ENCODE measurements at regions of chr12 and their contacts with region 1.

Region 1: DNA sequence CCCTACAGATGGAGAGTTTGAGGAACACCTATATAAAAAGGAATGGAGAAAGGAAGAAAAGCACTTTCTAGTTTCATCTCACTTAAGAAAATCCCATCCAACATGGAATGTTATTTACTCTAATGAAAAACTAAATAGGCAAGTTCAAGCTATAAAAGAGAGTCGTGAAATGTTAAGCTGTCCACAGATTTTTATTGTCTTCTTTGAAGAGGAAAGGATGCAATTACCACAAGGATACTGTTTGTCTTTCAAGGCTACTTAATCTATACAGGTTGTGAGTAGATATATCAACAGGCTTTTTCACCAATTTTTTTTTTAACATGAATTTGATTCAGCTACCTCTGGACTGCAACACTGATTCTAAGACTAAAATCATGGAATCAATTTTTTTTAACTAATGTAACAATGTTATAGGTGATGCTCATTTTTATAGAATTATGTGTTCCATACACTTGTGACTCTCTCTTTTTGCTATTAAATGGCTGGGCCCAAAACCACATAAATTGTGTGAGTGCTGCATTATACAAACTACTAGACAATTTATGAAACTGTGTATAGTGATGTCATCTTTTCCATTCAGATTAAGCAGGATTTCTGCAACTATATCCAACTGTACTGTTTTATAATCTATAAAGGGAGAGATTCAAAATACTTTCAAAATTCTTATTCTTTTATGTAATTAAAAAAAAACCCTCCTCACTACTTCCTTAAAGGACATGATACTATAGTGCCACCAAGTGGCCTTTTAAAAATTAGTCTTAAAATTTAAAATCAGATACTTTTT is 26.8 kb upstream of the BMAL2 start:
- DNase-seq: no peak
- ATAC-seq: no peak
- H3K4me3 Mint-ChIP-seq: no peak overlapping the region
- H3K27ac Mint-ChIP-seq: no peak overlapping the region
- H3K4me1 Mint-ChIP-seq: peaks cover 9% of the 10 kb centered on the region
- H3K27me3 Mint-ChIP-seq: no peaks in the 10 kb centered on the region
- CTCF ChIP-seq: peak; percentile 69

Region 2: DNA sequence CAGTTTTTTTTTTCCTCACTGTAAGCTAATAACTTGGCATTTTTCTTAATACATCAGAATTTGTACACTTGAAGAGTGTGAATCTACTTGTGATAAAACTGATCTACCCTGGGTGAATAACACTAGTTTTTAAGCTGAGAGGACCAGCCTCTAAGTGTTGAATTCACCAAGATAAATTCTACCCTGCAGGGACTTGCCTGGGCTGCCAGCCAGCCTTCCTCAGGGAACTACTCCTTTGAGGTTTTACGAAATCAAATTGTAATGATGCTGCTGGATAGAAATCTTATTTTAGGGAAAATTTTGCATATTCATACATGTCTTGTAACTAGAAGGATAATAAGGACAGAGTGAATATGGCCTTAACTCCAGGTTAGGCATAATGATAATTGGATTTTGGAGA is 281.6 kb before region 1 on chr12:
- CTCF ChIA-PET with region 1: interaction called, 18 read pairs
- POLR2A ChIA-PET with region 1: interaction called, 6 read pairs
- intact Hi-C with region 1: no loop called
- DNase-seq: no peak
- ATAC-seq: no peak
- H3K4me3 Mint-ChIP-seq: peak overlapping the region; percentile 6
- H3K27ac Mint-ChIP-seq: no peak overlapping the region
- H3K4me1 Mint-ChIP-seq: peaks cover 32% of the 10 kb centered on the region
- H3K27me3 Mint-ChIP-seq: no peaks in the 10 kb centered on the region
- CTCF ChIP-seq: no peak

Region 3: DNA sequence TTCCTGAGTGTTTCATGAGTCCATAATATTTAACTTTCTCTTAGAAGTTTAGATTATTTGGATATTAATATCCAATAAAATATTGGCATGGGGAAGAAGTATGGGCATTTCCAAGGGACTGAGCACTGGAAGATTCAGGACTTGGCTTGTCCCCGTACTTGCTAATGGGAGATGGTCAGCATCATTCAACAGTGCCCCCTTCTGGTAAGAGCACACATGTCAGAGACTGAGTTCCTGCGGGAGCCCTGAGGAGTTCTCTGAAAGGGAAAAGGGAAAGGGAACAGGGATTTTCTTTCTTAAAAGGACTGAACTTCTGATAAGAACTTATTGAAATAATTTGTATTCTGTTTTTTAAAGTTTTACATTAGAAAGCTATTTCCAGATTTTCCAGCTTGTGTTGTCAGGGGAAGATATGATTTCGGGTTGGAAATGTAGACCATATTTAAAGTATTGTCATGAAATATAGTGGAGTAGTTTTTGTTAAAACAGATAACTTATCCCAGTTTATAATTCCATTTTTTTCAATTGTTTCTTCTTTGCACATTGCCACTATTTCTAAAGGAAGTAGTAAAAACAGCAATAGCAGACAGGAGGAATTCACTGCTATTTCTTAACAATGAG is 163.7 kb before region 1 on chr12:
- CTCF ChIA-PET with region 1: interaction called, 30 read pairs
- POLR2A ChIA-PET with region 1: no interaction called
- intact Hi-C with region 1: loop called (anchors 10 kb)
- DNase-seq: peak; percentile 56
- ATAC-seq: peak; percentile 65
- H3K4me3 Mint-ChIP-seq: no peak overlapping the region
- H3K27ac Mint-ChIP-seq: no peak overlapping the region
- H3K4me1 Mint-ChIP-seq: peaks cover 7% of the 10 kb centered on the region
- H3K27me3 Mint-ChIP-seq: no peaks in the 10 kb centered on the region
- CTCF ChIP-seq: peak; percentile 95

Region 4: DNA sequence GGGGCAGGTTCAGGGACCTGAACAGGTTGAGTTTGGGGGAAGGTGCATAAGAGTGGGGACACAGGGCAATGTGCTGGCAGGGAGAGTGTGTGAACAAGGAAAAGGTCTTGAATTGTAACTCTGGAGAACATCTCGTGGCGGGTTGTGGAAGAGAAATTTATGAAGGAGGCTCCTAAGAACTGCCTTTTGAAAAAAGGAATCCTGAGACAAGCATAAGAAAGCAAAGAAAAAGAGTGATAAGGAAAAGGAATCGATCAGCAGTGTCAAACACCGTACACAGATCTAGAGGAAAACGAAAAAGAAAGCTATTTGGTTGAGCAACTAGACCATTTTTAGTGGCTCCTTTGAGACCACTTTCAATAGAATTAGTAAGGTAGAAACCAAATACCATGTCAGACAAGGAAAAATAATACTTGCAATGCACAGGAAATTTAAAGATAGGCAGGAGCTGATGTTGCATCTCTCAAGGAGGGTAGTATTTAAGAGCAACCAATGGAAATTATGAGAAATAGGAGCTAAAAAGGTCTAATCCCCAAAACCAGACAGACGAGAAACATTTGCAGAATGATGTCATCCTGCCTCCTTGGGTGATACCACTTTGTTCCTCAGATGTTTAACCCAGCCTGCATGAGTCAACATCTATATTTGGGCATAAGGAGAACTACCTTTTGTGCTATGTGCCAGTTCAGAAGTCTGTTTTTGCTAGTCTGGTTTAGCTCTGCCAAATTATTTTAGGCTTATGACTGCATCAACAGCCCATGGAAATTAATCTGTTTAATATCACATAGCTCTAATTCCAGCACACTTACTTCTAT is 126.3 kb before region 1 on chr12:
- CTCF ChIA-PET with region 1: interaction called, 15 read pairs
- POLR2A ChIA-PET with region 1: no interaction called
- intact Hi-C with region 1: no loop called
- DNase-seq: peak; percentile 63
- ATAC-seq: peak; percentile 95
- H3K4me3 Mint-ChIP-seq: peak overlapping the region; percentile 39
- H3K27ac Mint-ChIP-seq: peak overlapping the region; percentile 88
- H3K4me1 Mint-ChIP-seq: peaks cover 36% of the 10 kb centered on the region
- H3K27me3 Mint-ChIP-seq: no peaks in the 10 kb centered on the region
- CTCF ChIP-seq: no peak

Region 5: GRCh38 chr12:27319409-27319808 is 13.5 kb after region 1 on chr12:
- CTCF ChIA-PET with region 1: interaction called, 17 read pairs
- POLR2A ChIA-PET with region 1: no interaction called
- intact Hi-C with region 1: no loop called
- DNase-seq: no peak
- ATAC-seq: no peak
- H3K4me3 Mint-ChIP-seq: no peak overlapping the region
- H3K27ac Mint-ChIP-seq: no peak overlapping the region
- H3K4me1 Mint-ChIP-seq: no peaks in the 10 kb centered on the region
- H3K27me3 Mint-ChIP-seq: no peaks in the 10 kb centered on the region
- CTCF ChIP-seq: no peak

Measured in activated CD8-positive, alpha-beta T cell treated with anti-CD3 and anti-CD28 coated beads for 36 hours (primary cell).